Activated B cell treated with CpG ODN at 0.5 μM for 24 hours (primary cell): ENCODE measurements at regions of chr4 and their contacts with region 1.

Region 1: GRCh38 chr4:674172-675035 is at the starts of genes ATP5ME and MYL5:
- DNase-seq: peak; percentile 99
- ATAC-seq: peak; percentile 81
- H3K4me3 Mint-ChIP-seq: peak within 1 kb of the TSS; percentile 88
- H3K27ac Mint-ChIP-seq: peak within 1 kb of the TSS; percentile 75
- H3K4me1 Mint-ChIP-seq: peaks cover 34% of the 10 kb centered on the region
- H3K27me3 Mint-ChIP-seq: no peaks in the 10 kb centered on the region
- CTCF ChIP-seq: peak; percentile 46
- total RNA-seq, gene ATP5ME: 152 and 193 TPM in 2 replicates
- total RNA-seq, gene MYL5: 21.9 and 24.6 TPM in 2 replicates

Region 2: DNA sequence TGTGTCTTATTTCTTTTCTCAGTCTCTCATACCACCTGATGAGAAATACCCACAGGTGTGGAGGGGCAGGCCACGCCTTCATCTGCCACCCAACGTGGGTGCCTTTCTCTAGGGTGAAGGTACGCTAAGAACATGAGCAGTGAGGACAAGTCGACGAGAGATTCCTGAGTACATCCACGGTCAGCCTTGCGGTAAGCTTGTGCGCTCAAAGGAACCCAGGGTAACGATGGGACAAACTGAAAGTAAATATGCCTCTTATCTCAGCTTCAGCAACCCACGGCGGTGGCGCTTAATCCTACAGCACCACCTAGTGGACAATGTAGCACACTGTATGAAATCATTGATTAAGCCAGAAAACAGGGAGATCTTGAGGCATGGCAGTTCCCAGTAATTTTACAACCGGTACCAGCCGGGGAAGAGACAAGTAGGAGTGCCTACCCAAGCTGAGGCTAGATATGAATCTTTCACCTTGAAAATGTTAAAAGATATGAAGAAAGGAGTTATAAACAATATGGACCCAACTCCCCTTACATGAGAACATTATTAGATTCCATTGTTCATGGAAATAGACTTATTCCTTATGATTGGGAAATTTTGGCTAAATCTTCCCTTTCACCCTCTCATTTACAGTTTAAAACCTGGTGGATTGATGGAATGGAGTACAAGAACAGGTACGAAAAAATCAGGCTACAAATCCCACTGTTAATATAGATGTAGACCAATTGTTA is 432.1 kb before region 1 on chr4:
- CTCF ChIA-PET with region 1: interaction called, 4 read pairs
- POLR2A ChIA-PET with region 1: interaction called, 3 read pairs
- intact Hi-C with region 1: loop called (anchors 1 kb)
- DNase-seq: peak; percentile 44
- ATAC-seq: peak; percentile 94
- H3K4me3 Mint-ChIP-seq: peak overlapping the region; percentile 89
- H3K27ac Mint-ChIP-seq: peak overlapping the region; percentile 89
- H3K4me1 Mint-ChIP-seq: peaks cover 13% of the 10 kb centered on the region
- H3K27me3 Mint-ChIP-seq: no peaks in the 10 kb centered on the region
- CTCF ChIP-seq: no peak

Region 3: GRCh38 chr4:473570-474457 is 200.6 kb before region 1 on chr4:
- CTCF ChIA-PET with region 1: no interaction called
- POLR2A ChIA-PET with region 1: interaction called, 8 read pairs
- intact Hi-C with region 1: loop called (anchors 1 kb)
- DNase-seq: peak; percentile 80
- ATAC-seq: peak; percentile 98
- H3K4me3 Mint-ChIP-seq: peak overlapping the region; percentile 99
- H3K27ac Mint-ChIP-seq: peak overlapping the region; percentile 99
- H3K4me1 Mint-ChIP-seq: peaks cover 37% of the 10 kb centered on the region
- H3K27me3 Mint-ChIP-seq: no peaks in the 10 kb centered on the region
- CTCF ChIP-seq: no peak

Region 4: DNA sequence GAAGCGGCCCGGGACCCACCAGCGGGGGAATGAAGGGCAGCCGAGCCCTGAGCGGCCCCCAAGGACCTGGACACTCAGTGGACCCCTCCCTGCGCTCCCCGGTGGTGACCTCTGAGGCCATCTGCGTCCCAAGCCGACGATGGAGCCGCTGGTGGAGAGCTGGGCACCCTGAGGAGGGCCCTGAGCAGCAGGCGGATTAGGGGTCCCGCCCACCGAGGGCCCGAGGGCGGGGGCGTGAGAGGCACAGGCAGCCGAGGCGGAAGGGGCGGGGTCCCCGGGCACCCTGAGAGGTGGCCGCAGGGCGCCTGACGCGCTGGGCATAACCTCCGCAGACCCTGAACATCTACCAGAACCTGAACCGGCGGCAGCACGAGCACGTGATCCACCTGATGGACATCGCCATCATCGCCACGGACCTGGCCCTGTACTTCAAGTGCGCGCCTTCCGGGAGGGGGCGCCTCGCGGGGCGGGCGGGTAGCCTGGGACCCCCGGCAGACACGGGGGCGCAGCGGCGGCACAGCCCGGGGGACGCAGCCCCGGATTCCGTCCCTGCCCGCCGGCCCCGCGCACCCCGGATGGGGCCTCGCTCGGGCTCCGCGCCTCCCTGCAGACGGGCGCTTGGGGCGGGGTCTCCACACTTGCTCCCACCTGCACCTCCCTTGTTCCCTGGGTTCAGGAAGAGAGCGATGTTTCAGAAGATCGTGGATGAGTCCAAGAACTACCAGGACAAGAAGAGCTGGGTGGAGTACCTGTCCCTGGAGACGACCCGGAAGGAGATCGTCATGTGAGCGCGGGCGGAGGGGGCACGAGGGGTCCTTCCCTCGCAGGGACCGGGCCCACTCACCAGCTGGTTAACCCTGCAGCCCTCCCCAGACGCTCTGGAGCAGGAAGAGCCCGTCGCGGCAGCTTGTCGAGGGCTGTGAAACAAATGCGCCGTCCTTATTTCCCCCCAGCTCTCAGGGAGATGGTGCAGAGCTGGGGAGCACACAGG is 10.7 kb before region 1 on chr4:
- CTCF ChIA-PET with region 1: interaction called, 10 read pairs
- POLR2A ChIA-PET with region 1: interaction called, 56 read pairs
- intact Hi-C with region 1: loop called (anchors 1 kb)
- DNase-seq: peak; percentile 69
- ATAC-seq: peak; percentile 90
- H3K4me3 Mint-ChIP-seq: peak overlapping the region; percentile 85
- H3K27ac Mint-ChIP-seq: peak overlapping the region; percentile 80
- H3K4me1 Mint-ChIP-seq: peaks cover 14% of the 10 kb centered on the region
- H3K27me3 Mint-ChIP-seq: no peaks in the 10 kb centered on the region
- CTCF ChIP-seq: no peak

Region 5: GRCh38 chr4:705278-706082 is 31.1 kb after region 1 on chr4 and contains the start of gene PCGF3:
- CTCF ChIA-PET with region 1: interaction called, 3 read pairs
- POLR2A ChIA-PET with region 1: interaction called, 48 read pairs
- intact Hi-C with region 1: loop called (anchors 1 kb)
- DNase-seq: peak; percentile 95
- ATAC-seq: peak; percentile 97
- H3K4me3 Mint-ChIP-seq: peak within 1 kb of the TSS; percentile 87
- H3K27ac Mint-ChIP-seq: peak within 1 kb of the TSS; percentile 76
- H3K4me1 Mint-ChIP-seq: peaks cover 35% of the 10 kb centered on the region
- H3K27me3 Mint-ChIP-seq: no peaks in the 10 kb centered on the region
- CTCF ChIP-seq: no peak
- total RNA-seq, gene PCGF3: 51.3 and 59.2 TPM in 2 replicates

Region 6: GRCh38 chr4:931960-932712 is 257.7 kb after region 1 on chr4 and contains the starts of genes GAK and TMEM175:
- CTCF ChIA-PET with region 1: no interaction called
- POLR2A ChIA-PET with region 1: interaction called, 6 read pairs
- intact Hi-C with region 1: loop called (anchors 2 kb)
- DNase-seq: peak; percentile 99
- ATAC-seq: peak; percentile 90
- H3K4me3 Mint-ChIP-seq: peak within 1 kb of the TSS; percentile 93
- H3K27ac Mint-ChIP-seq: peak within 1 kb of the TSS; percentile 92
- H3K4me1 Mint-ChIP-seq: peaks cover 78% of the 10 kb centered on the region
- H3K27me3 Mint-ChIP-seq: no peaks in the 10 kb centered on the region
- CTCF ChIP-seq: no peak
- total RNA-seq, gene GAK: 159 and 172 TPM in 2 replicates
- total RNA-seq, gene TMEM175: 24.5 and 28.8 TPM in 2 replicates

Region 7: DNA sequence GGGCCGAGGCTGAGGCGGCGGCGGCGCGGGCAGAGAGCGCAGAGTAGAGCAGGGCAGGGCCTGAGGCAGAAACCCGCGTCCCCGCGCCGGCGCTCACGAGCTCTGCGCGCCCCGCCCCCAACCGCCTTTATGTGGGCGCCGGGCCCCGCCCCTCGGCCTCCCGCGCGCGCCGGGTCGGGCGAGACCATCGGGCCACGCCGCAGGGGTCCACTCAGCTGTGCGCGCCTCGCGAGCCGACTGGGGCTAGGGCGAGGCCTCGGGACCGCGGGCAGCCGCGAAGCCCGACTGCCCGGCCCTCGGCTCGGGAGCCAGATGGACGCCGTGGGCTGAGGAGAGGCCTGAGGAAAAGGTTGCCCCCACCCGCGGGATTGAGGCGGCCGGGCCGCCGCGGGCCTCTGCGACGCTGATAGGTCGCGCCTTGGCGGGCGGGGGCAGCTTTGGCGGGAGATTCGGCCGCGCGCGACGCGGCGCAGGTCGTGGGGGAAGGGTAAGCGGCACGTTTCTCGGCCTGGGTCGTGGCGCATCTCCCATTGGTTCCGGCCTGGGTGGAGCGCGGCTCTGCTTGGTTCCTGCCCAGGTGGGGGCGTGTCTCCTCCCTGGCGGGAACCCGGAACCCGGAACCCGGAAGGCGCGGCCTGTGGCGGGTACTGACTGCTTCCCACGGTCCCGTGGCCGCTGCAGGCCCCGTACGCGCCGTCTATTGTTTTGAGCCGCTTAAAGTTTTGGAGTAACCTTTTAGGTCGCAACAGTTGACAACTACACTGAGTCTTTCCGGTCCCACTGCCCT is 1038.0 kb after region 1 on chr4 and contains the start of gene SLBP:
- CTCF ChIA-PET with region 1: no interaction called
- POLR2A ChIA-PET with region 1: no interaction called
- intact Hi-C with region 1: loop called (anchors 1 kb)
- DNase-seq: peak; percentile 97
- ATAC-seq: peak; percentile 87
- H3K4me3 Mint-ChIP-seq: peak within 1 kb of the TSS; percentile 94
- H3K27ac Mint-ChIP-seq: peak within 1 kb of the TSS; percentile 93
- H3K4me1 Mint-ChIP-seq: peaks cover 73% of the 10 kb centered on the region
- H3K27me3 Mint-ChIP-seq: no peaks in the 10 kb centered on the region
- CTCF ChIP-seq: no peak
- total RNA-seq, gene SLBP: 34.0 and 37.8 TPM in 2 replicates